ENCODE measurements at regions of chr2 and their contacts with region 1.

Region 1: GRCh38 chr2:10043906-10044601 is 704 bp downstream of the KLF11 start:
- DNase-seq: peak; percentile 65
- H3K4me3 ChIP-seq: peak overlapping the region; percentile 43
- CTCF ChIP-seq: no peak

Region 2: DNA sequence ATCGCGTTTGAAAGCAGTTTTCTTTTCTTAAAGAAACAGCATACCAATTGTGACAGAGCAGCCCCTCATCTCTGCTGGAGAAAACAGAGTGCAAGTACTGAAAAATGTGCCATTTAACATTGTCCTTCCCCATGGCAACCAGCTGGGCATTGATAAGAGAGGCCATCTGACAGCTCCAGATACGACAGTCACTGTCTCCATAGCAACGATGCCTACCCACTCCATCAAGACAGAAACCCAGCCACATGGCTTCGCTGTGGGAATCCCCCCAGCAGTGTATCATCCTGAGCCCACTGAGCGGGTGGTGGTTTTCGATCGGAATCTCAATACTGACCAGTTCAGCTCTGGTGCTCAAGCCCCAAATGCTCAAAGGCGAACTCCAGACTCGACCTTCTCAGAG is 83.0 kb before region 1 on chr2:
- in situ Hi-C with region 1: loop called (anchors 5 kb)
- DNase-seq: no peak
- H3K4me3 ChIP-seq: no peak overlapping the region
- CTCF ChIP-seq: no peak

Region 3: GRCh38 chr2:9973690-9974089 is 70.4 kb before region 1 on chr2:
- in situ Hi-C with region 1: no loop called
- DNase-seq: no peak
- H3K4me3 ChIP-seq: no peak overlapping the region
- CTCF ChIP-seq: no peak

Region 4: DNA sequence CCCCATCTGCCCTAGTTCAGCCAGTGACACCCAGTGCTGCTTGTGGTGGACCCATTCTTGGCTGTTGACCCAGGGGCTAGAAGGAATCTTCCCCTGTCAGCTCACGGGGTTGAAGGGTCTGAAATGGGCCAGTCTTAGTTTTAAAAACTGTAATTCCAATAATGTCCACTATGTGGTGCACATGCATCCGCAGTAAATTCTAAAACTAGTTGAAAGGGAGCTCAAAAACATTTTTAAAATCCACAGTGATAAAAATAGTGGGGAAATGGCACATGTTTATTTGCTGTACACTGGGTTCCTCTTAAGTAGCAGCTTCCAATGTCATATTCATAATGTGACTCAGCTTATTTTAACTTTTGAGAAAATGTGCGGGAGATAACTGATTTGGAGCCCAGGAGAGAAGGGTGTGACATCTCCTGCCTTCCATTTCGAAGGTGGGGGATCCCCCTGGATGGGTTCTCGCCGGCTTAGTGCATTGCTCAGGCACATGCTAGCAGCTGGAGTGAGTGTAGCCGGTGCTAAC is 59.8 kb before region 1 on chr2:
- in situ Hi-C with region 1: no loop called
- DNase-seq: peak; percentile 13
- H3K4me3 ChIP-seq: no peak overlapping the region
- CTCF ChIP-seq: peak; percentile 62

Measured in astrocyte of the cerebellum (primary cell).